ENCODE measurements at regions of chr1 and their contacts with region 1.

Region 1: GRCh38 chr1:182397771-182398393 is 2.6 kb downstream of the TEDDM1 start:
- DNase-seq: no peak
- ATAC-seq: no peak
- H3K4me3 ChIP-seq: no peak overlapping the region
- H3K4me3 Mint-ChIP-seq: no peak overlapping the region
- H3K27ac ChIP-seq: no peak overlapping the region
- H3K27ac Mint-ChIP-seq: no peak overlapping the region
- H3K4me1 ChIP-seq: peaks cover 0 to 2% of the 10 kb centered on the region in 2 experiments
- H3K4me1 Mint-ChIP-seq: peaks cover 4 to 10% (median 7%) of the 10 kb centered on the region in 3 donors
- H3K27me3 ChIP-seq: no peaks in the 10 kb centered on the region
- H3K27me3 Mint-ChIP-seq: no peaks in the 10 kb centered on the region

Region 2: GRCh38 chr1:181459067-181459466 is 938.8 kb before region 1 on chr1:
- CTCF ChIA-PET with region 1: no interaction called
- POLR2A ChIA-PET with region 1: interaction called in 1 of 2 experiments, 14 read pairs
- DNase-seq: no peak
- ATAC-seq: no peak
- H3K4me3 ChIP-seq: no peak overlapping the region
- H3K4me3 Mint-ChIP-seq: no peak overlapping the region
- H3K27ac ChIP-seq: no peak overlapping the region
- H3K27ac Mint-ChIP-seq: no peak overlapping the region
- H3K4me1 ChIP-seq: no peaks in the 10 kb centered on the region
- H3K4me1 Mint-ChIP-seq: no peaks in the 10 kb centered on the region
- H3K27me3 ChIP-seq: peaks cover 0 to 25% of the 10 kb centered on the region in 2 experiments
- H3K27me3 Mint-ChIP-seq: peaks cover 11 to 37% of the 10 kb centered on the region in 2 donors

Region 3: GRCh38 chr1:182084487-182085316 is 313.2 kb before region 1 on chr1:
- CTCF ChIA-PET with region 1: interaction called, 31 to 32 read pairs
- POLR2A ChIA-PET with region 1: no interaction called
- DNase-seq: peak; percentile 38 to 85 (median 67)
- ATAC-seq: peak; percentile 68 to 76 (median 74)
- H3K4me3 ChIP-seq: no peak overlapping the region
- H3K4me3 Mint-ChIP-seq: peak overlapping the region in 2 of 3 donors; percentile 37 to 39
- H3K27ac ChIP-seq: peak overlapping the region; percentile 25
- H3K27ac Mint-ChIP-seq: peak overlapping the region; percentile 91 to 95
- H3K4me1 ChIP-seq: peaks cover 22 to 51% of the 10 kb centered on the region in 2 experiments
- H3K4me1 Mint-ChIP-seq: peaks cover 44 to 49% (median 49%) of the 10 kb centered on the region in 3 donors
- H3K27me3 ChIP-seq: no peaks in the 10 kb centered on the region
- H3K27me3 Mint-ChIP-seq: no peaks in the 10 kb centered on the region

Region 4: GRCh38 chr1:182143154-182143657 is 254.7 kb before region 1 on chr1:
- CTCF ChIA-PET with region 1: interaction called, 112 to 138 read pairs
- POLR2A ChIA-PET with region 1: interaction called, 3 to 8 read pairs
- DNase-seq: peak; percentile 58 to 91 (median 83)
- ATAC-seq: peak; percentile 74 to 82 (median 78)
- H3K4me3 ChIP-seq: no peak overlapping the region
- H3K4me3 Mint-ChIP-seq: no peak overlapping the region
- H3K27ac ChIP-seq: no peak overlapping the region
- H3K27ac Mint-ChIP-seq: peak overlapping the region in 1 of 2 donors; percentile 41
- H3K4me1 ChIP-seq: peaks cover 0 to 3% of the 10 kb centered on the region in 2 experiments
- H3K4me1 Mint-ChIP-seq: peaks cover 4 to 11% (median 5%) of the 10 kb centered on the region in 3 donors
- H3K27me3 ChIP-seq: peaks cover 0 to 14% of the 10 kb centered on the region in 2 experiments
- H3K27me3 Mint-ChIP-seq: peaks cover 0 to 4% of the 10 kb centered on the region in 2 donors

Region 5: DNA sequence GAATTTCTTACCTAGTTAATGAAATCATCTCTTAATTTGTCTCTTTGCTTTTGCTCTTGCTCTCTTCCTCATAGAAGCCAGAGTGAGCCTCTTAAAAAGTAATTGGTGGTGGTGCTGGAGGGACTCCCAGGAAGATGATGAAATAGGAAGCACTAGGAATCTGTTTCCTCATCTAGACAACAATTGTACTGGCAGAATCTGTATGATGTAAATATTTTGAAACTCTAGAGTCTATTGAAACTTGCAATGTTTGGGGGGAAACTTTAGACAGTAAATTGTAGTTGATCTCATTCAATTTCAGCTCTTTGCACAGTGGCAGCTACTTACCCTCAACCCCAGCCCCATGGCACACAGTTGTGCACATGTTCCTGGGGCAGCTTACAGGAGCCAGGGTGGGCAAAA is 62.7 kb after region 1 on chr1:
- CTCF ChIA-PET with region 1: interaction called in 1 of 2 experiments, 13 read pairs
- POLR2A ChIA-PET with region 1: no interaction called
- DNase-seq: no peak
- ATAC-seq: no peak
- H3K4me3 ChIP-seq: no peak overlapping the region
- H3K4me3 Mint-ChIP-seq: no peak overlapping the region
- H3K27ac ChIP-seq: no peak overlapping the region
- H3K27ac Mint-ChIP-seq: no peak overlapping the region
- H3K4me1 ChIP-seq: no peaks in the 10 kb centered on the region
- H3K4me1 Mint-ChIP-seq: no peaks in the 10 kb centered on the region
- H3K27me3 ChIP-seq: peaks cover 0 to 17% of the 10 kb centered on the region in 2 experiments
- H3K27me3 Mint-ChIP-seq: peaks cover 21 to 37% of the 10 kb centered on the region in 2 donors

Measured in T-cell (primary cell).